GM12878 (cell line): ENCODE measurements at regions of chr5 and their contacts with region 1.

Region 1: DNA sequence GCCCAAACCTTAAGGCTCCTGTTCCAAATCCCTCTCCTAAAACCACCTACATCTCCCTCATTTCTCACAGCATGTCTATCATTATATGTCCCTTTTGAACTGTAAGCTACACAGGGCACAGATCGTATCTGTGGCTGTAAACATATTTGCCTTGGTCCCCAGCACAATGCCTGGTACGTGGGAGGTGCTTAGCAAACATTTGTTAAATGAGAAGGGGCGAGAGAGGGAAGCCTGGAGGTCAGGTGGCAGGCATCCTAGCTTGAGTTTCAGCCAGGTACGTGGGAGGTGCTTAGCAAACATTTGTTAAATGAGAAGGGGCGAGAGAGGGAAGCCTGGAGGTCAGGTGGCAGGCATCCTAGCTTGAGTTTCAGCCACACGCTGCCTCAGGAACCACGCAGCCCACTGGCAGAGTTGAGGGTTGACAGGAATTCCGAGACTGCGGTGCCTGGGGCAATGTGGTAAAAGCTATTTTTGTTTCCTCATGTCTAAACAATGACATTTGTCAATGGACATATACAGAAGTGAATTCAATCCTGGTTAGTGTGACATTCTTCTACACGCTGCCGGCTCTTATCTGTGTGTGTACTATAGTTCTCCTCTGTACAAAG is 113.6 kb downstream of the EFNA5 start:
- DNase-seq: no peak
- ATAC-seq: no peak
- H3K4me3 ChIP-seq: no peak overlapping the region
- H3K27ac ChIP-seq: no peak overlapping the region
- H3K4me1 ChIP-seq: peaks cover 4% of the 10 kb centered on the region; the same call in 1 of the 2 replicates
- H3K27me3 ChIP-seq: no peaks in the 10 kb centered on the region; a peak in 1 of 4 replicates
- CTCF ChIP-seq: no peak
- EP300 ChIP-seq: no peak
- POLR2A ChIP-seq: no peak
- RAD21 ChIP-seq: no peak

Region 2: DNA sequence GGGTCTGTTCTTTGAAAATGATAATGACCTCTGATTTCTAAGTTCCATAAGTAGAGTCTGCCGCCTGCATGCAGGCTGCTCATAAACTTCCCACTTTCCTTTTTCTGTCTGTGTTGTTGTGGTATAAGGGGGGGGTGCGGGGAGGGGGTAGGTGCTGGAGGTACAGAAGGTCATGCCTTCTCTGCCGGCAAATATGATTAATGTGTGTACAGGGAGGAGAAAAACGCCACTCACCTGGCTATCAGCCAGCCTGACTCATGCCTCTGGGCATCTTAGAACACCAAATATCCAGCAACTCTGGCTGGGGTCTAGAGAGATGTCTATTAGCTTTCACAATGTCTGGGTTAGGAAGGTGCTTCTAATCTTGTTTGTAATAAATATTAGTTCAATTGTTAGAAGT is 14.7 kb before region 1 on chr5:
- CTCF ChIA-PET with region 1: interaction called, 8 read pairs
- POLR2A ChIA-PET with region 1: interaction called, 5 read pairs
- RAD21 ChIA-PET with region 1: interaction called, 6 read pairs
- SMC1A ChIA-PET with region 1: interaction called, 12 read pairs
- in situ Hi-C with region 1: no loop called
- intact Hi-C with region 1: no loop called
- DNase-seq: peak; percentile 52
- ATAC-seq: peak; percentile 75
- H3K4me3 ChIP-seq: no peak overlapping the region; the same call in 1 of the 2 replicates
- H3K27ac ChIP-seq: no peak overlapping the region
- H3K4me1 ChIP-seq: peaks cover 3% of the 10 kb centered on the region; the same call in 1 of the 2 replicates
- H3K27me3 ChIP-seq: no peaks in the 10 kb centered on the region
- CTCF ChIP-seq: no peak
- EP300 ChIP-seq: no peak
- POLR2A ChIP-seq: no peak
- RAD21 ChIP-seq: no peak

Region 3: DNA sequence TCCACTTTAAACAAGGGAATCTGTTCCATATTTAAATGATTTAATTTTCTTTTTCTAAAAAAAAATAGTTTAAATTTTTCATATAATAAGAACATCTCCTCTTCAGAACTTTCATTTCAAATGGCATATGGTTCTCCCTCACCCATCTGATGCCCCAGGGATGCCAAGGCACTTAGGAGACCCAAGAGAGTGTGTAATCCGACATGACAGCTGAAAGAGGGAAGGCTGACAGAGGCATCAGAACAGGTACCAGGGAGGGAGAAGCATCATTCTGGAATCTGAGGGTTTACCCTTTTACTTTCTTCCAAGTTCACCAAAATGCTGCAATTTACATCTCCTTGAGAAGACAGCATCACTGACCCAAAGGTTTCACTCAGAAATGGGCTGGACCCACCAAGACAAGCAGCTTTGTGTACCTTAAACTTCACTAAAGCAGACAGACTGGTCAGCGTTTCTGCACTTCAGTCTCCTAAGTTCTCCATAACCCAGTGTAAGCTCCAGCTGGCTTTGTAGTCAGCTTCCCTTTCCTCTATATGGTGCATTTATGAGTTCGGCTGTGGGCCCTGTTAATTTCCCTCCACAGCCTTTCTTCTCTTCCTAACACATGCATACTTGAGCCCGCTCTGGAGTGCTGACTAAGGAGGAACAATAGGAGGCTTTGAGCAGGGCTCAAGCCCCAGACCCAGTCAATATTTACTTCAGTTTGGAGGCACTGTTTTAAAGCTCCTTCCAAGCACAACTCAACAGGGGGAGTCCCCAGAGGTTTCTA is 95.9 kb after region 1 on chr5:
- CTCF ChIA-PET with region 1: no interaction called
- POLR2A ChIA-PET with region 1: no interaction called
- RAD21 ChIA-PET with region 1: no interaction called
- SMC1A ChIA-PET with region 1: no interaction called
- in situ Hi-C with region 1: no loop called
- intact Hi-C with region 1: no loop called
- DNase-seq: no peak
- ATAC-seq: peak; percentile 57
- H3K4me3 ChIP-seq: peak overlapping the region; percentile 25; the same call in 1 of the 2 replicates
- H3K27ac ChIP-seq: no peak overlapping the region
- H3K4me1 ChIP-seq: no peaks in the 10 kb centered on the region
- H3K27me3 ChIP-seq: no peaks in the 10 kb centered on the region; a peak in 1 of 4 replicates
- CTCF ChIP-seq: no peak
- EP300 ChIP-seq: no peak
- POLR2A ChIP-seq: no peak
- RAD21 ChIP-seq: no peak